Activated T-helper 1 cell treated with anti-CD3 and anti-CD28 coated beads, Interleukin-12 subunit alpha, Interleukin-12 subunit beta, Interleukin-2, Interleukin-4 antibody, amounts not matched to agents 30 ng/mL and 10 ng/mL and 1 ng/mL, durations not matched to agents 14 hours and 24 hours and 36 hours (primary cell): ENCODE measurements at regions of chr4 and their contacts with region 1.

Region 1: DNA sequence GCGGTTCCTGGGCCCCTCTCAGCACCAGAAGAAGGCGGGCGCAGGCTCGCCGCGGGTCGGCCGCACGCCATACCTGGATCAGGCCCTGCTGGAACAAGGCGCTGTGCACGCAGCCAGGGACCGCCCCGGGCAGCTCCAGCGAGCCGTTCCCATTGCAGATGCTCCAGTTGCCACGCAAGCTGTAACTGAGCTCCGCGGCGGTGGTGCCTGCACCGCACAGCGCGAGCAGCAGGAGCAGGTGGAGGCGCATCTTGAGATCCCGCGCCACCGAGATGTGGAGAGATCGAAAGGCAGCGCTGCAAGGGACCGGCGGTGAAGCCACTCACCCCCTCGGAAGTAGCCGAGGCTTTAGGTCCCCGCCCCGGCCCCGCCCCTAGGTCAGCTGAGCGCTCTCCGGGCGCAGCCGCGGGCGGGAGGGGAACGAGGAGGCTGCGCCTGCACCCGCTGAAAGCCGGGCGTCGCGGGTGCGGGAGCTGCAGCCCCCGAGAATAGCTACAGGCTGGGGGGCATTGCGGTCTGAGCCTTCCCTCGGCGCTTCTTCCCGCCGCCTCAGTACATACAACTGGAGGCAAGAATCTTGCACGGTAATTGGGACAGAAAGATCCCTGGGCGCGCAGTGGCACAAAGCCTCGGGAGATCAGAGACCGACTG is at the start of gene MANBA:
- DNase-seq: peak; percentile 77
- H3K4me3 Mint-ChIP-seq: peak within 1 kb of the TSS; percentile 96
- H3K27ac Mint-ChIP-seq: peak within 1 kb of the TSS; percentile 90
- H3K4me1 Mint-ChIP-seq: peaks cover 31% of the 10 kb centered on the region
- H3K27me3 Mint-ChIP-seq: peaks cover 13% of the 10 kb centered on the region
- total RNA-seq, gene MANBA: 7.5 and 8.0 TPM in 2 replicates

Region 2: GRCh38 chr4:102780476-102781144 is 19.8 kb after region 1 on chr4:
- intact Hi-C with region 1: loop called (anchors 1 kb)
- DNase-seq: no peak
- H3K4me3 Mint-ChIP-seq: no peak overlapping the region
- H3K27ac Mint-ChIP-seq: no peak overlapping the region
- H3K4me1 Mint-ChIP-seq: no peaks in the 10 kb centered on the region
- H3K27me3 Mint-ChIP-seq: peaks cover 6% of the 10 kb centered on the region

Region 3: DNA sequence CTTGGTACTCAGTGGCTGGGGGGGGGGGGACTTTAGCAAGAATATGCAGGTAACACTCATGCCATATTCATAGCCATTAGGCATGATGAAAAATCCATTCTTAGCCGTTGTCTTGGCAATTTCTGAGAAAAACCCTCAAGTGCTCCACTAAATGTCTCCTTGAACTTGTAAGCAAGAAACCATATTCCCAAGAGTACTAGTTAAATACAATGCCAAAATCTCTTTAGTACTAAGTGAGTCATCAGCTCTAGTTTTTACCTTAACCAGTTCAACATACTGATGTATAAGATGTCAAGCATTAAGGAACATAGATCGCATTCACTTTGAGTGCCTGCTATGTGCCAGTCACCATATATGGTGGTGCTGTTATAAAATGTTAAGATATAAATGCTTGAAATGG is 39.0 kb after region 1 on chr4:
- intact Hi-C with region 1: loop called (anchors 5 kb)
- DNase-seq: no peak
- H3K4me3 Mint-ChIP-seq: no peak overlapping the region
- H3K27ac Mint-ChIP-seq: no peak overlapping the region
- H3K4me1 Mint-ChIP-seq: peaks cover 39% of the 10 kb centered on the region
- H3K27me3 Mint-ChIP-seq: no peaks in the 10 kb centered on the region

Region 4: DNA sequence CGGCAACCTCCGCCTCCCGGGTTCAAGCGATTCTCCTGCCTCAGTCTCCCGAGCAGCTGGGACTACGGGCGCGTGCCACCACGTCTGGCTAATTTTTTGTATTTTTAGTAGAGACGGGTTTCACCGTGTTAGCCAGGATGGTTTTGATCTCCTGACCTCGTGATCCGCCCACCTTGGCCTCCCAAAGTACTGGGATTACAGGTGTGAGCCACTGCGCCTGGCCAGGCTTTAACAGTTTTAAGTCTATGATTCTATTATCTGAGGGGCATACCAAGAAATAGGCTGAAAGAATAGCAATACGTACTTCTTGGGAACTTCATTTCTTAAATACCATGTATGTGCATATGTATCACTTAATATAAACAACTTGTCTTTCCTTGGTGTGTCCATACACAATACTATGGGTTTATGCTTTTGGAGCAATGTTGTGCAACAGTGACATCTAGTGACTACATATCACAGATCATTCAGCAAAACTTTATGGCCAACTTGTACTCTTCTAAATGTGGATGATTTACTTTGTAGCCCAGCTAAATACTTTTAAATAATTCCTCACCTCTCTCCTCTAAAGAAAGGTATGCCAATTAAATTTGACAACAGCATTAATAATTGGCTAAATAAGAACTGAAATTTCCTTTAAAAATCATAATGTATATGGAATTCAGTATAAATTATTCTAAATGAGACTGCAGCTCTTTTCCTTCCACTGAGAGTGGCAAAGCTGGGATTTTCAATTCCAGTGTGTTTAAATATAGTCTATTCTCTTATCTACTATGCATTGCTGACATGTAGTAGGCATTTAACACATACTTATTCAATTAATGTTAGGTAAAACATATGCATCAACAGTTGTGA is 248.3 kb after region 1 on chr4:
- intact Hi-C with region 1: loop called (anchors 1 kb)
- DNase-seq: peak; percentile 32
- H3K4me3 Mint-ChIP-seq: no peak overlapping the region
- H3K27ac Mint-ChIP-seq: no peak overlapping the region
- H3K4me1 Mint-ChIP-seq: no peaks in the 10 kb centered on the region
- H3K27me3 Mint-ChIP-seq: peaks cover 4% of the 10 kb centered on the region

Region 5: GRCh38 chr4:103075901-103076739 is 315.4 kb after region 1 on chr4:
- intact Hi-C with region 1: loop called (anchors 1 kb)
- DNase-seq: peak; percentile 60
- H3K4me3 Mint-ChIP-seq: peak overlapping the region; percentile 99
- H3K27ac Mint-ChIP-seq: peak overlapping the region; percentile 100
- H3K4me1 Mint-ChIP-seq: peaks cover 51% of the 10 kb centered on the region
- H3K27me3 Mint-ChIP-seq: no peaks in the 10 kb centered on the region

Region 6: GRCh38 chr4:104465201-104465600 is 1704.4 kb after region 1 on chr4:
- intact Hi-C with region 1: no loop called
- DNase-seq: no peak
- H3K4me3 Mint-ChIP-seq: no peak overlapping the region
- H3K27ac Mint-ChIP-seq: no peak overlapping the region
- H3K4me1 Mint-ChIP-seq: no peaks in the 10 kb centered on the region
- H3K27me3 Mint-ChIP-seq: no peaks in the 10 kb centered on the region